GM12878 (cell line): ENCODE measurements at regions of chr5 and their contacts with region 1.

Region 1: GRCh38 chr5:131382407-131383395 is 118.8 kb downstream of the CDC42SE2 start:
- DNase-seq: peak; percentile 71
- ATAC-seq: peak; percentile 74
- H3K4me3 ChIP-seq: no peak overlapping the region
- H3K27ac ChIP-seq: peak overlapping the region; percentile 95
- H3K4me1 ChIP-seq: peaks cover 57% of the 10 kb centered on the region
- H3K27me3 ChIP-seq: no peaks in the 10 kb centered on the region
- CTCF ChIP-seq: peak; percentile 67 to 83 (median 69)
- EP300 ChIP-seq: 0 out of 4 replicates have a peak, but pooled peaks of 1 of the 2 experiments have one; percentile 2
- POLR2A ChIP-seq: no peak
- RAD21 ChIP-seq: peak; percentile 79

Region 2: DNA sequence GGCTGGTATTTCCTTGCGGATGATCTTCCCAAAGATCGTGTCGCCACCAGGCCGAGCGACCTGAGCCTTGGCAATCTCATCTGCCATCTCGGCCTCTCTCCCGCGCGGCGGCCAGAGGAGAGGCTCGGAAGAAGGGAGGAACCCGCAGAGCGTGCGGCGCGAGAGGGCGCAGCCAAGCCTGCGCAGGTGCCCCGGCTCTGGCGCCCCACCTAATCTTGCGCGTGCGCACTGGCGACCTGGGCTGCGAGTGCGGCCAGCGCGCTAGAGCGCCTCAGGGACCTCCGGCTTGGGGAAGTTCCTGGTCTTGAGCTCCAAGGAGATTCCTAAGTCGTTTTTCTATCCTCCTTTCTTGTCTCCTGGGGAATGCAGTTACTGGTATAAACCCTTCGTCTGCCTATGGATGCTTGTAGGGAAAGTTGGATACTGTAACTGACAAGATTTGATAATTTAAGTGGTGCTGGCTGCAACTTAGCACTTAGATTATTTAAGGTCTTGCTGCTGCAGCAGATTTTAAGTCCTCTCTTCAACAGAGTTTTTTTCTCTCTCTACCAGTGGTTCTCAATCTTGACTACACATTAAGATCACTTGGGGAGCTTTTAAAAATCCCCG is 217.5 kb before region 1 on chr5 and contains the start of gene HINT1:
- CTCF ChIA-PET with region 1: interaction called, 6 read pairs
- POLR2A ChIA-PET with region 1: interaction called, 5 read pairs
- RAD21 ChIA-PET with region 1: interaction called, 11 read pairs
- SMC1A ChIA-PET with region 1: interaction called, 10 read pairs
- in situ Hi-C with region 1: loop called (anchors 5 kb)
- intact Hi-C with region 1: loop called (anchors 2 kb)
- DNase-seq: peak; percentile 75
- ATAC-seq: peak; percentile 90
- H3K4me3 ChIP-seq: peak within 1 kb of the TSS; percentile 92
- H3K27ac ChIP-seq: peak within 1 kb of the TSS; percentile 86
- H3K4me1 ChIP-seq: peaks cover 3% of the 10 kb centered on the region; the same call in 1 of the 2 replicates
- H3K27me3 ChIP-seq: no peaks in the 10 kb centered on the region
- CTCF ChIP-seq: peak in 2 of 3 experiments; percentile 18 to 45; a peak in 4 of 6 replicates
- EP300 ChIP-seq: no peak
- POLR2A ChIP-seq: peak; percentile 85
- RAD21 ChIP-seq: peak; percentile 38; the same call in 1 of the 2 replicates
- polyA plus RNA-seq, gene HINT1: 844 to 901 TPM

Region 3: GRCh38 chr5:131224387-131225201 is 158.1 kb before region 1 on chr5:
- CTCF ChIA-PET with region 1: interaction called, 5 read pairs
- POLR2A ChIA-PET with region 1: interaction called, 5 read pairs
- RAD21 ChIA-PET with region 1: interaction called, 17 read pairs
- SMC1A ChIA-PET with region 1: interaction called, 14 read pairs
- in situ Hi-C with region 1: no loop called
- intact Hi-C with region 1: loop called (anchors 2 kb)
- DNase-seq: peak; percentile 96
- ATAC-seq: peak; percentile 82
- H3K4me3 ChIP-seq: peak overlapping the region; percentile 64
- H3K27ac ChIP-seq: peak overlapping the region; percentile 78
- H3K4me1 ChIP-seq: peaks cover 30% of the 10 kb centered on the region
- H3K27me3 ChIP-seq: no peaks in the 10 kb centered on the region
- CTCF ChIP-seq: no peak
- EP300 ChIP-seq: peak; percentile 94 to 96
- POLR2A ChIP-seq: peak; percentile 75
- RAD21 ChIP-seq: no peak; the same call in 1 of the 2 replicates

Region 4: GRCh38 chr5:131270809-131271208 is 111.9 kb before region 1 on chr5:
- CTCF ChIA-PET with region 1: interaction called, 53 read pairs
- POLR2A ChIA-PET with region 1: interaction called, 28 read pairs
- RAD21 ChIA-PET with region 1: interaction called, 145 read pairs
- SMC1A ChIA-PET with region 1: interaction called, 67 read pairs
- in situ Hi-C with region 1: no loop called
- intact Hi-C with region 1: loop called (anchors 2 kb)
- DNase-seq: no peak
- ATAC-seq: no peak
- H3K4me3 ChIP-seq: peak overlapping the region; percentile 70
- H3K27ac ChIP-seq: peak overlapping the region; percentile 71
- H3K4me1 ChIP-seq: peaks cover 31% of the 10 kb centered on the region
- H3K27me3 ChIP-seq: no peaks in the 10 kb centered on the region
- CTCF ChIP-seq: no peak
- EP300 ChIP-seq: no peak
- POLR2A ChIP-seq: no peak
- RAD21 ChIP-seq: no peak

Region 5: GRCh38 chr5:131357739-131358561 is 24.8 kb before region 1 on chr5:
- CTCF ChIA-PET with region 1: interaction called, 10 read pairs
- POLR2A ChIA-PET with region 1: interaction called, 5 read pairs
- RAD21 ChIA-PET with region 1: interaction called, 6 read pairs
- SMC1A ChIA-PET with region 1: interaction called, 17 read pairs
- in situ Hi-C with region 1: no loop called
- intact Hi-C with region 1: no loop called
- DNase-seq: no peak
- ATAC-seq: peak; percentile 74
- H3K4me3 ChIP-seq: no peak overlapping the region
- H3K27ac ChIP-seq: peak overlapping the region; percentile 45
- H3K4me1 ChIP-seq: peaks cover 35% of the 10 kb centered on the region
- H3K27me3 ChIP-seq: no peaks in the 10 kb centered on the region
- CTCF ChIP-seq: peak in 2 of 3 experiments; percentile 7 to 28; a peak in 2 of 6 replicates
- EP300 ChIP-seq: no peak
- POLR2A ChIP-seq: no peak
- RAD21 ChIP-seq: peak; percentile 56

Region 6: GRCh38 chr5:131496400-131497007 is 113.8 kb after region 1 on chr5:
- CTCF ChIA-PET with region 1: no interaction called
- POLR2A ChIA-PET with region 1: no interaction called
- RAD21 ChIA-PET with region 1: no interaction called
- SMC1A ChIA-PET with region 1: no interaction called
- in situ Hi-C with region 1: no loop called
- intact Hi-C with region 1: no loop called
- DNase-seq: peak; percentile 51
- ATAC-seq: peak; percentile 99
- H3K4me3 ChIP-seq: no peak overlapping the region
- H3K27ac ChIP-seq: peak overlapping the region; percentile 13; the same call in 1 of the 2 replicates
- H3K4me1 ChIP-seq: peaks cover 9% of the 10 kb centered on the region; the same call in 1 of the 2 replicates
- H3K27me3 ChIP-seq: no peaks in the 10 kb centered on the region
- CTCF ChIP-seq: peak; percentile 42 to 53 (median 51); a peak in 5 of 6 replicates
- EP300 ChIP-seq: peak in 1 of 2 experiments; percentile 77; a peak in 1 of 4 replicates
- POLR2A ChIP-seq: no peak
- RAD21 ChIP-seq: peak; percentile 30; the same call in 1 of the 2 replicates

Region 7: GRCh38 chr5:131607418-131607817 is 224.7 kb after region 1 on chr5:
- CTCF ChIA-PET with region 1: no interaction called
- POLR2A ChIA-PET with region 1: no interaction called
- RAD21 ChIA-PET with region 1: no interaction called
- SMC1A ChIA-PET with region 1: no interaction called
- in situ Hi-C with region 1: no loop called
- intact Hi-C with region 1: no loop called
- DNase-seq: no peak
- ATAC-seq: no peak
- H3K4me3 ChIP-seq: no peak overlapping the region
- H3K27ac ChIP-seq: no peak overlapping the region
- H3K4me1 ChIP-seq: peaks cover 4% of the 10 kb centered on the region
- H3K27me3 ChIP-seq: no peaks in the 10 kb centered on the region
- CTCF ChIP-seq: no peak
- EP300 ChIP-seq: no peak
- POLR2A ChIP-seq: no peak
- RAD21 ChIP-seq: no peak

Region 8: DNA sequence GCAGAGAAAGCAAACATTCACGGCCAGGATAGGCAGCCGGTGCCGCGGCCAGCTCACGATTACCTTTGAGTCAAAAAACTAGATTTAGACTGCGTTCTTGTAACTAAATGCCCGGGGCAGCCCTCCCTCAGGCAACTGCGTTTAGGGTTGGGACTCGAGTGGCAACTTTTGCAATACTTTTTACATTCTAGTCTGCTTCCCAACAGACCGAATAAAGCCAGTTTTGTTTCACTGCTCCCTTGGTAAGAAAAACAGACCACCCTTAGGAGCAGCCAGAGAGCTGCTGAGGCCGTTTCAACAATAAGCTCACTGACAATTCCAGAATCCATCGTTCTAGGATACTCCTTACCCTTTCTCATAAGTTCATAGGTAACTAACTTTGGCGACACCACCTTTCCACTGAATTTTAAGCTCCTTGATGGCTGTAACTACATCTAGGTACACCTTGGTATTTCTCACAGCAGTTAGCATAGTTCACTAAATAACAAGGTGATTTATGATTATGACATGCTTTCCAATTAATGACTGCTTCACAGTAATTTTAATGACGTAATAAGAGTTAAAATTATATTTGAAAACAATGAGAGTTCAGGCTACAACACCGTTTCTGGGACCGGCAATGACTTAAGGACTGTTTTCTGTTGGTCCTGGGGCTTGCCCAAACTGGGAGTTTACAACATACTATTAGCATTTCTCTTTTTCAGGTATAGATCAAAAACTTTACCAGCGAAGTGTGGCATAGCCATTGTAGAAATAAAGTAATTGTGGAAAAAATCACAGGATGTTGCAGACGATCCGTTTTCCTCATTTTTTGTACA is 253.3 kb after region 1 on chr5:
- CTCF ChIA-PET with region 1: no interaction called
- POLR2A ChIA-PET with region 1: no interaction called
- RAD21 ChIA-PET with region 1: no interaction called
- SMC1A ChIA-PET with region 1: no interaction called
- in situ Hi-C with region 1: no loop called
- intact Hi-C with region 1: no loop called
- DNase-seq: peak; percentile 20
- ATAC-seq: peak; percentile 3; the same call in 2 of the 3 replicates
- H3K4me3 ChIP-seq: peak overlapping the region; percentile 75
- H3K27ac ChIP-seq: peak overlapping the region; percentile 98
- H3K4me1 ChIP-seq: peaks cover 26% of the 10 kb centered on the region
- H3K27me3 ChIP-seq: no peaks in the 10 kb centered on the region
- CTCF ChIP-seq: no peak
- EP300 ChIP-seq: no peak
- POLR2A ChIP-seq: no peak; the same call in 1 of the 2 replicates
- RAD21 ChIP-seq: no peak